WTC11 (cell line): ENCODE measurements at regions of chr3 and their contacts with region 1.

Region 1: DNA sequence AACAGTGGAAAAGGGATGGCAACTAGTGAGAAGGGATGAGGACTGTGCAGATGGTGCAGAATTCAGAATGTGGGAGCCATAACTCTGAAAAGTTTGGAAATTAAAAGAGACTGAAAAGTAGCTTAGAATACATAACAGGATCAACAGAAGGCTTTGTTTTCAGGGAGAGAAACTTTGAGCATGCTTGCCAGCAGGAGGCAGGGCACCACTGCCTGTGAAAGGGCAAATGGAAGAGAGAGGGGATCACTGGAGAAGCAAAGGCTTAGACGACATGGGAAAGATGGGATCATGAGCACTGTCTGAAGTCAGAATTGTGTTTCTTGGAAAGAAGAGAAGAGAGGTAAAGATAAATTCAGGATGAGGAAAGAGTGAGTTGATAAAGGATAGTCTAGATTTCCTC is 99.6 kb downstream of the ABI3BP start:
- DNase-seq: peak; percentile 65
- ATAC-seq: peak; percentile 85
- H3K4me3 Mint-ChIP-seq: no peak overlapping the region
- H3K27ac Mint-ChIP-seq: no peak overlapping the region
- H3K4me1 Mint-ChIP-seq: peaks cover 7% of the 10 kb centered on the region
- H3K27me3 Mint-ChIP-seq: no peaks in the 10 kb centered on the region
- CTCF ChIP-seq: peak; percentile 43; the same call in 1 of the 2 replicates

Region 2: GRCh38 chr3:100825574-100825973 is 68.0 kb before region 1 on chr3:
- CTCF ChIA-PET with region 1: interaction called, 19 read pairs
- POLR2A ChIA-PET with region 1: no interaction called
- DNase-seq: no peak
- ATAC-seq: no peak
- H3K4me3 Mint-ChIP-seq: no peak overlapping the region
- H3K27ac Mint-ChIP-seq: no peak overlapping the region
- H3K4me1 Mint-ChIP-seq: no peaks in the 10 kb centered on the region
- H3K27me3 Mint-ChIP-seq: no peaks in the 10 kb centered on the region
- CTCF ChIP-seq: no peak

Region 3: GRCh38 chr3:100972867-100973266 is 79.3 kb after region 1 on chr3:
- CTCF ChIA-PET with region 1: no interaction called
- POLR2A ChIA-PET with region 1: no interaction called
- DNase-seq: no peak
- ATAC-seq: no peak
- H3K4me3 Mint-ChIP-seq: no peak overlapping the region
- H3K27ac Mint-ChIP-seq: no peak overlapping the region
- H3K4me1 Mint-ChIP-seq: no peaks in the 10 kb centered on the region
- H3K27me3 Mint-ChIP-seq: no peaks in the 10 kb centered on the region
- CTCF ChIP-seq: no peak

Region 4: GRCh38 chr3:101381809-101382208 is 488.2 kb after region 1 on chr3:
- CTCF ChIA-PET with region 1: interaction called, 14 read pairs
- POLR2A ChIA-PET with region 1: no interaction called
- DNase-seq: no peak
- ATAC-seq: peak; percentile 13; the same call in 1 of the 2 replicates
- H3K4me3 Mint-ChIP-seq: no peak overlapping the region
- H3K27ac Mint-ChIP-seq: no peak overlapping the region
- H3K4me1 Mint-ChIP-seq: peaks cover 9% of the 10 kb centered on the region
- H3K27me3 Mint-ChIP-seq: no peaks in the 10 kb centered on the region
- CTCF ChIP-seq: 0 out of 2 replicates have a peak, but pooled peaks have one; percentile 17